Dorsolateral prefrontal cortex (tissue), 120 donors: ENCODE measurements at regions of chr5 and their contacts with region 1.

Region 1: DNA sequence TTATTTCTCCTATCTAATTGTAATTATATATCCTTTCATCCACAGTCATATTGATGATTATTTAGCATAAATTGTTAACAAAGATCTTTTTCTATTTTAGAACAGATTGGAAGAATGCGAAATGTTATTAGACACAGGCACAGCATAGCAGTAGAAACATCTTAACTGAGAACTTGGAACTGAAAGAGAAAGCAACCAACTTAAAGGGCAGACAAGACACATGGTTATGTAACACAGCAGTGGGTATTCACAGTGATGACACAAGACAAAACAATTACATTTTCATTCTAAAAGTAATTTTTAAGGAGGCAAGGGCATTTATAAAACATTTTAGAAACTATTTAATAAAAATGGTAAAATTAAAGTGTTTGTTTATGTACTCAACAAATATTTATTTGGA is 57.7 kb upstream of the MEF2C start:
- DNase-seq: no peak
- H3K4me3 ChIP-seq: no peak overlapping the region
- H3K27ac ChIP-seq: peak overlapping the region in 2 of 59 donors; percentile 18 to 20
- H3K27me3 ChIP-seq: no peaks in the 10 kb centered on the region
- CTCF ChIP-seq: no peak

Region 2: GRCh38 chr5:88778736-88779135 is 162.0 kb before region 1 on chr5:
- intact Hi-C with region 1: no loop called
- DNase-seq: peak in 5 of 10 donors; percentile 55 to 77 (median 59)
- H3K4me3 ChIP-seq: peak overlapping the region in 10 of 59 donors; percentile 3 to 41 (median 16)
- H3K27ac ChIP-seq: peak overlapping the region in 29 of 59 donors; percentile 0 to 67 (median 39)
- H3K27me3 ChIP-seq: no peaks in the 10 kb centered on the region
- CTCF ChIP-seq: no peak

Region 3: DNA sequence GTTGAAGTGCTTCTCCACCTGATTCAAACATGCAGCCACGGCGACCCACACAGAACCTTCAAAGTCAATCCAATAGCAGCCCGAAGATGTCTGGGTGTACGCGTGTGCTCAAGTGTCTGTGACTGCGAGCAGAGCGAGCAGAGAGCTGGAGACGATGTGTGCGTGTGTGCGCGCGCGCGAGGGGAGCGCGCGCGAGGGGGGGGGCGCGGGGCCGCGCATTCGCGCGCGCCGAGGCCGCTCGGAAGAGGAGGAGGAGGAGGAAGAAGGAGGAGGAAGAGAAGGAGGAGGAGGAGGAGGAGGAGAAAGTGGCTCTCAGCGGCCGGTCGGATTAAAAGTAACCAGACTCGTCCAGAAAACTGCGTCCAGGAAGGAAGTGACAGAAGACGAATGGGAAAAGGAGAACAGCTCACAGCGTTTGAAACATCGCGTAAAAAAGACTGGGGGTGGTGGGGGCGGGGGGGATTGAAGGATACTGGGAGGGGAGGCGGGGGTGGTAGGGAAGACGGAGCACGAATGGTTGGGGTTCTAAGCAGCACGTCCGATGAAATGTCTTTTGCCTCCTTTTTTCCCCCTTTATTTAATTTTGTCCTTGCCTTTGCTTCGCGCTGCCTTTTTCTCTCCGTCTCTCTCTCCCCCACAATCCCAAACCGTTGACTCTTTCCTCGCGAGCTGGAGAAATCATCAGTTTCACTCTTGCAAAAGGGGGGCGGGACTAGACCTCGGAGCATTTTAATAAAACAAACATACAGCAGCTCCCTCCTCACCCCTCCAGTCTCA is 57.5 kb before region 1 on chr5 and contains the start of gene MEF2C:
- intact Hi-C with region 1: loop called (anchors 5 to 10 kb)
- DNase-seq: peak in 9 of 10 donors; percentile 43 to 77 (median 68)
- H3K4me3 ChIP-seq: peak within 1 kb of the TSS; percentile 50 to 89 (median 78)
- H3K27ac ChIP-seq: peak within 1 kb of the TSS; percentile 70 to 99 (median 96)
- H3K27me3 ChIP-seq: no peaks in the 10 kb centered on the region
- CTCF ChIP-seq: no peak
- total RNA-seq, gene MEF2C: 147 to 673 (median 441) TPM

Region 4: DNA sequence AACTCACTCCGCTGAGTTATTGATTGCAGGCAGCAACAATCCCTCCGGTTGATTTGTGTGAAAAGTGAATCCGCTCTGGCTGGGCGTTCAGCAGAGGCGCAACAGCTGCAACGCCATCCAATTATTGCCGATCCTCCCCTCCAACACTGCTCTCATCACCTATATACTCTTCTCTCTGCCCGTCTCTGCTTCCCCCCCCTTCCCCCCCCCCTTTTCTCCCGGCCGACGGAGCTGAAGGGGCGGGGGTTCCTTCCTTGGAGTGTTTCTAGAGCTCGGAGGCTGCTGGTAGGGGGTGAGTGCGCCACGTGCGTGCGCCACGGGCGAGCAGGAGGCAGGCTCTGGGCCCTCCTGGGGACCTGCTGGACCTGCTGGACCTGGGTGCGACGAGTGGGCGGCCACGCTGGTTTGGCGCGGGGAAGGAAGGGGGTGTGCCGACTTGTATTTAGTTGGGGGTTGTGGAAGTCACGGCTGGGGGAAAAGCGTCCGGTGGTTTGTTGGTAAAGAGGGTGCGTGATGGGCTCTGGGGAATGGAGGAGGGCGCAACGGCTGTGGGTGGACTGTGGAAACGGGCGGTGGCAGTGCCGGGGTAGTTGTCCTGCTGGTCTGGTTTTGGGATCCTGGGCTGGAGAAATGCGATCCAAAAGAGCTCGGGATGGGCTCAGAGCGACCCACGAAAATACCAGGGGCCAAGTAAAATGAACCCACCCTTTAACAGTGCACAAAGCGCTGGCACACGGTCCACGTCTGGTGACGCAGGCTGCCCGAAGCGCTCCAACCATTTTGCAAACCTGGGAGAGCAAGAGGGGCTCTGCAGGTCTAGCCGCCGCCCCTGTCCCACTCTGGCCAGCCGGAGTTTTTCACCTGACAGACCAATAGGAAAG is 51.3 kb before region 1 on chr5:
- intact Hi-C with region 1: loop called (anchors 5 to 10 kb)
- DNase-seq: peak; percentile 23 to 77 (median 66)
- H3K4me3 ChIP-seq: peak overlapping the region; percentile 40 to 88 (median 67)
- H3K27ac ChIP-seq: peak overlapping the region in 58 of 59 donors; percentile 31 to 99 (median 96)
- H3K27me3 ChIP-seq: no peaks in the 10 kb centered on the region
- CTCF ChIP-seq: peak in 1 of 56 donors; percentile 9